ENCODE measurements at regions of chr2 and their contacts with region 1.

Region 1: GRCh38 chr2:162037028-162037795 is 36.8 kb downstream of the DPP4 start:
- DNase-seq: no peak
- ATAC-seq: no peak
- H3K4me3 ChIP-seq: no peak overlapping the region
- H3K4me3 Mint-ChIP-seq: no peak overlapping the region
- H3K27ac ChIP-seq: no peak overlapping the region
- H3K27ac Mint-ChIP-seq: no peak overlapping the region
- H3K4me1 ChIP-seq: no peaks in the 10 kb centered on the region
- H3K4me1 Mint-ChIP-seq: peaks cover 0 to 39% (median 12%) of the 10 kb centered on the region in 7 donors
- H3K27me3 ChIP-seq: no peaks in the 10 kb centered on the region
- H3K27me3 Mint-ChIP-seq: no peaks in the 10 kb centered on the region

Region 2: DNA sequence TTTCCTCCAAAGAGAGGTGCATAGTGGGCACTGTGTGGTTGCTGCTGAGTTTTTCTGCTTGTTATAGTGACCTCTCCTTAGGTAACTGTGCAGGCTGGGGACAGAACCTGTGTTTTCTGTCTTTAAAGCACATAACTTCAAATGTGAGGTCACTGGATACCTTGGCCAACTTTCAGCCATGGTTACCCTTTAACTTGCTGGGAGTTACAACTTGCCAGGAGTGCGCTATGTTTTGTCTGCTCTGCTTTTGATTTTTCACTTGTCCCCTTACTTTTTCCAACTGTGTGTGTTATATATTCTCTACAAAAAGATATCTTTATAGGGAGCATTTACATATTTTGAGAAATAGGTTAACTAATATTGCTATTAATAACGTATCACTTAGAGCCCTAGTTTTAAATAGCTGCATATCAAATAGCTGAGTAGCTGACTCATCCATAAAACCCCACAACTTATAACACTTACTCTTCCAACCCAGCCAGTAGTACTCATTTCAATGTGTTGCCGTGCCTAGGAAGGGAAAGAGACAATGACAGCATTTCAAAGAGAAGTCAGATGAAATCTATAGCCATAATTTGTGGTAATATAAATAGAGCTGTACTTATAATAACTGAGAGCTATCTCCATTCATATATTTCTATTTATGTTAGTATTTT is 14.8 kb before region 1 on chr2:
- CTCF ChIA-PET with region 1: no interaction called
- POLR2A ChIA-PET with region 1: interaction called, 6 read pairs
- intact Hi-C with region 1: loop called in 1 of 2 experiments (anchors 1 kb)
- DNase-seq: no peak
- ATAC-seq: no peak
- H3K4me3 ChIP-seq: no peak overlapping the region
- H3K4me3 Mint-ChIP-seq: peak overlapping the region in 7 of 10 donors; percentile 43 to 76 (median 69)
- H3K27ac ChIP-seq: no peak overlapping the region
- H3K27ac Mint-ChIP-seq: peak overlapping the region; percentile 31 to 94 (median 85)
- H3K4me1 ChIP-seq: peaks cover 0 to 27% of the 10 kb centered on the region in 2 donors
- H3K4me1 Mint-ChIP-seq: peaks cover 22 to 66% (median 60%) of the 10 kb centered on the region in 7 donors
- H3K27me3 ChIP-seq: no peaks in the 10 kb centered on the region
- H3K27me3 Mint-ChIP-seq: no peaks in the 10 kb centered on the region

Region 3: GRCh38 chr2:162058973-162059668 is 21.9 kb after region 1 on chr2:
- CTCF ChIA-PET with region 1: no interaction called
- POLR2A ChIA-PET with region 1: interaction called, 3 read pairs
- intact Hi-C with region 1: loop called in 1 of 2 experiments (anchors 2 kb)
- DNase-seq: no peak
- ATAC-seq: peak; percentile 33
- H3K4me3 ChIP-seq: peak overlapping the region; percentile 48
- H3K4me3 Mint-ChIP-seq: peak overlapping the region; percentile 64 to 83 (median 76)
- H3K27ac ChIP-seq: peak overlapping the region; percentile 39
- H3K27ac Mint-ChIP-seq: peak overlapping the region; percentile 45 to 91 (median 84)
- H3K4me1 ChIP-seq: peaks cover 35 to 42% of the 10 kb centered on the region in 2 donors
- H3K4me1 Mint-ChIP-seq: peaks cover 32 to 92% (median 88%) of the 10 kb centered on the region in 7 donors
- H3K27me3 ChIP-seq: no peaks in the 10 kb centered on the region
- H3K27me3 Mint-ChIP-seq: no peaks in the 10 kb centered on the region